Natural killer cell (primary cell): ENCODE measurements at regions of chr6 and their contacts with region 1.

Region 1: GRCh38 chr6:36442671-36443470 is at the starts of genes KCTD20 and PXT1:
- DNase-seq: peak; percentile 87 to 92
- ATAC-seq: peak; percentile 80 to 94 (median 88)
- H3K4me3 ChIP-seq: peak within 1 kb of the TSS; percentile 91
- H3K4me3 Mint-ChIP-seq: peak within 1 kb of the TSS; percentile 97
- H3K27ac ChIP-seq: peak within 1 kb of the TSS; percentile 89
- H3K27ac Mint-ChIP-seq: peak within 1 kb of the TSS; percentile 94 to 95
- H3K4me1 ChIP-seq: peaks cover 25% of the 10 kb centered on the region
- H3K4me1 Mint-ChIP-seq: peaks cover 37 to 45% of the 10 kb centered on the region in 2 donors
- H3K27me3 ChIP-seq: no peaks in the 10 kb centered on the region
- H3K27me3 Mint-ChIP-seq: no peaks in the 10 kb centered on the region
- CTCF ChIP-seq: no peak
- total RNA-seq, gene KCTD20: 37.7 to 43.5 (median 43.2) TPM
- total RNA-seq, gene PXT1: 0.27 to 1.0 (median 0.28) TPM

Region 2: GRCh38 chr6:36546920-36547645 is 104.2 kb after region 1 on chr6 and contains the start of gene STK38:
- intact Hi-C with region 1: loop called (anchors 5 kb)
- DNase-seq: peak; percentile 87 to 96
- ATAC-seq: peak; percentile 84 to 92 (median 87)
- H3K4me3 ChIP-seq: peak within 1 kb of the TSS; percentile 89
- H3K4me3 Mint-ChIP-seq: peak within 1 kb of the TSS; percentile 99
- H3K27ac ChIP-seq: peak within 1 kb of the TSS; percentile 93
- H3K27ac Mint-ChIP-seq: peak within 1 kb of the TSS; percentile 93 to 100
- H3K4me1 ChIP-seq: peaks cover 35% of the 10 kb centered on the region
- H3K4me1 Mint-ChIP-seq: peaks cover 47 to 56% of the 10 kb centered on the region in 2 donors
- H3K27me3 ChIP-seq: no peaks in the 10 kb centered on the region
- H3K27me3 Mint-ChIP-seq: no peaks in the 10 kb centered on the region
- CTCF ChIP-seq: no peak
- total RNA-seq, gene STK38: 105 to 157 (median 126) TPM

Region 3: DNA sequence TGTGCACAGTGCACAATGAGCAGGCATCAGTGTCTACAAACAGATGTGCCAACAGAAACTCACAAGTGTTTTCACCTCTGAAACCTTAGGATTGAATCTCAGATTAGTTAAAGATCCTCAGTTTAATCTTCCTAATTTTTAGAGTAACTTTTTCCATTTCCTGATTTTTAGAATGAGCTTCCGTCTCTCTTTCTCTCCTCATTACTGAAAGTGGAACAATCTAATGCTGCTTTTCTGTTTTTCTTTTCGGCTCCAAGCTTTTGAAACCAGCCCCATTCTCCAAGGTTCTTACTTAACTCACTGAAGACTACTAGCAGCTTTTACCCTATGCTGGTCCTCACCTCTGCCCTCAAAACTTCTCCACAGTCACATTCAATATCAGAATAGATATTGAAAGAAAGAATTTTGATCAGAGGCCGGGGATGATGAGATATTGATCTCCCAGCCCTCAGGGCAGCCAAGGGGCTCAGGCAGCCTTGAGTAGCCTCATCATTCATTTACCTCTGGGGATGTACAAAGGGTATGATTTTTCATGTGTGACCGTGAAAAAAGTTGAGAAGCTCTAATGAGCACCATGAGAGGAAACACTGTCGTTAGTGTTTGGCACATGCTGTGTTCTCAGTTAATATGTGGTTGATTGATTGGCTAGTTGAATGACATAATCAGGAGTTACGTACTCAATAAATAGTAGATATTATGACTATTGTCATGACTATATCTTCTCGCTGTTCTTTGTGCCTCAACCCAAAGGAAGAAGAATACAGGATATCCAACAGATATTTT is 116.3 kb after region 1 on chr6:
- intact Hi-C with region 1: no loop called
- DNase-seq: no peak
- ATAC-seq: no peak
- H3K4me3 ChIP-seq: no peak overlapping the region
- H3K4me3 Mint-ChIP-seq: no peak overlapping the region
- H3K27ac ChIP-seq: no peak overlapping the region
- H3K27ac Mint-ChIP-seq: no peak overlapping the region
- H3K4me1 ChIP-seq: no peaks in the 10 kb centered on the region
- H3K4me1 Mint-ChIP-seq: peaks cover 10 to 13% of the 10 kb centered on the region in 2 donors
- H3K27me3 ChIP-seq: no peaks in the 10 kb centered on the region
- H3K27me3 Mint-ChIP-seq: peaks cover 7 to 11% of the 10 kb centered on the region in 2 donors
- CTCF ChIP-seq: no peak

Region 4: DNA sequence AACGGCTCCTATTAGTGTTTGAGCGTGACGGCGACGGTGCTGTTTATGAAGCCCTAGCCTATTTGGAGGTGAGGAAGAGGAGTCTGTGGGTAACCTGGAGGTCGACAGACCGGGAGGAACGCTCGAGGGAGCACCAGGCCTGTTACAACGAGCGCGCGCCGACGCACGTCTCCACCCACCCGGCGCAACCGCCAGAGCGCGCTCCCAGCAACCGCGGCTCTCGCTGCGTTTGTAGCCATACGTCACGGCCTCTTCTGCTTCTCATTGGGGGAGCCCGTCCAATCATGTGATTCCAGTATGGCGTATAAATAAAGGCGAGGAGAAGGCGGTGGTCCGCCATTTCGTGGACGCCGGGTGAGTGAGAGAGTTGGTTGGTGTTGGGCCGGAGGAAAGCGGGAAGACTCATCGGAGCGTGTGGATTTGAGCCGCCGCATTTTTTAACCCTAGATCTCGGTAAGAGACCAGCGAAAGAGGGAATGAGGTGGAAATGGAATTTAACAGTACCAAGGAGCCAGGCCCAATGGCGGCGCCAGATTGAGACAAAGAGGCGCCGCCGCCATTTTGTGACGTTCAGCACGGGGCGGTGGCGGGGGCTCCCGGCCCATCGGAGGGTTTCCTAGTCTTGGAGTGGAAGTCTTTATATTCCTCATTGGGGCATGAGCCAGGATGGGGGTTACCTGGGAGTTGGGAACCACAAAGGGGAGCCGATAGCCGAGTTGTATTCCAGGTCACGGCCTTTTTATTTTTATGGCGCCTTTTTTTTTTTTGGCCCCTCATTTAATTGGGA is 151.4 kb after region 1 on chr6 and contains the start of gene SRSF3:
- intact Hi-C with region 1: loop called (anchors 5 kb)
- DNase-seq: peak; percentile 95 to 99
- ATAC-seq: peak; percentile 80 to 96 (median 87)
- H3K4me3 ChIP-seq: peak within 1 kb of the TSS; percentile 82
- H3K4me3 Mint-ChIP-seq: peak within 1 kb of the TSS; percentile 94
- H3K27ac ChIP-seq: peak within 1 kb of the TSS; percentile 98
- H3K27ac Mint-ChIP-seq: peak within 1 kb of the TSS; percentile 97 to 99
- H3K4me1 ChIP-seq: peaks cover 52% of the 10 kb centered on the region
- H3K4me1 Mint-ChIP-seq: peaks cover 59 to 60% of the 10 kb centered on the region in 2 donors
- H3K27me3 ChIP-seq: no peaks in the 10 kb centered on the region
- H3K27me3 Mint-ChIP-seq: peaks cover 0 to 2% of the 10 kb centered on the region in 2 donors
- CTCF ChIP-seq: no peak
- total RNA-seq, gene SRSF3: 445 to 526 (median 447) TPM

Region 5: DNA sequence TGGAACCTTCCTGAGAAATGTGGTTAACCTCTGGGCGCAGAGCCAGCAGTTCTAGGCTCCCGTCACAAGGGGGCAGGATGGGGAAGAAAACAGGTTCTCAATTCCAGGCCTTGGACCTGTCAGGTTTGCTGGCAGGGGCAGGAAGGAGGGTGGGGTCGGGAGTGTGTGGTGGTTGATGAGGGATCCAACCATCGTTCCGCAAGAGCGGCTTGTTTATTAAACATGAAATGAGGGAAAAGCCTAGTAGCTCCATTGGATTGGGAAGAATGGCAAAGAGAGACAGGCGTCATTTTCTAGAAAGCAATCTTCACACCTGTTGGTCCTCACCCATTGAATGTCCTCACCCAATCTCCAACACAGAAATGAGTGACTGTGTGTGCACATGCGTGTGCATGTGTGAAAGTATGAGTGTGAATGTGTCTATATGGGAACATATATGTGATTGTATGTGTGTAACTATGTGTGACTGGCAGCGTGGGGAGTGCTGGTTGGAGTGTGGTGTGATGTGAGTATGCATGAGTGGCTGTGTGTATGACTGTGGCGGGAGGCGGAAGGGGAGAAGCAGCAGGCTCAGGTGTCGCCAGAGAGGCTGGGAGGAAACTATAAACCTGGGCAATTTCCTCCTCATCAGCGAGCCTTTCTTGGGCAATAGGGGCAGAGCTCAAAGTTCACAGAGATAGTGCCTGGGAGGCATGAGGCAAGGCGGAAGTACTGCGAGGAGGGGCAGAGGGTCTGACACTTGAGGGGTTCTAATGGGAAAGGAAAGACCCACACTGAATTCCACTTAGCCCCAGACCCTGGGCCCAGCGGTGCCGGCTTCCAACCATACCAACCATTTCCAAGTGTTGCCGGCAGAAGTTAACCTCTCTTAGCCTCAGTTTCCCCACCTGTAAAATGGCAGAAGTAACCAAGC is 180.9 kb after region 1 on chr6:
- intact Hi-C with region 1: no loop called
- DNase-seq: peak; percentile 67 to 88
- ATAC-seq: peak; percentile 78 to 94 (median 94)
- H3K4me3 ChIP-seq: no peak overlapping the region
- H3K4me3 Mint-ChIP-seq: no peak overlapping the region
- H3K27ac ChIP-seq: no peak overlapping the region
- H3K27ac Mint-ChIP-seq: peak overlapping the region in 1 of 2 donors; percentile 35
- H3K4me1 ChIP-seq: peaks cover 11% of the 10 kb centered on the region
- H3K4me1 Mint-ChIP-seq: peaks cover 0 to 14% of the 10 kb centered on the region in 2 donors
- H3K27me3 ChIP-seq: no peaks in the 10 kb centered on the region
- H3K27me3 Mint-ChIP-seq: peaks cover 0 to 2% of the 10 kb centered on the region in 2 donors
- CTCF ChIP-seq: peak; percentile 86

Region 6: GRCh38 chr6:36703982-36704381 is 261.1 kb after region 1 on chr6:
- intact Hi-C with region 1: no loop called
- DNase-seq: no peak
- ATAC-seq: no peak
- H3K4me3 ChIP-seq: no peak overlapping the region
- H3K4me3 Mint-ChIP-seq: no peak overlapping the region
- H3K27ac ChIP-seq: no peak overlapping the region
- H3K27ac Mint-ChIP-seq: no peak overlapping the region
- H3K4me1 ChIP-seq: peaks cover 8% of the 10 kb centered on the region
- H3K4me1 Mint-ChIP-seq: peaks cover 0 to 4% of the 10 kb centered on the region in 2 donors
- H3K27me3 ChIP-seq: no peaks in the 10 kb centered on the region
- H3K27me3 Mint-ChIP-seq: peaks cover 0 to 5% of the 10 kb centered on the region in 2 donors
- CTCF ChIP-seq: no peak

Region 7: DNA sequence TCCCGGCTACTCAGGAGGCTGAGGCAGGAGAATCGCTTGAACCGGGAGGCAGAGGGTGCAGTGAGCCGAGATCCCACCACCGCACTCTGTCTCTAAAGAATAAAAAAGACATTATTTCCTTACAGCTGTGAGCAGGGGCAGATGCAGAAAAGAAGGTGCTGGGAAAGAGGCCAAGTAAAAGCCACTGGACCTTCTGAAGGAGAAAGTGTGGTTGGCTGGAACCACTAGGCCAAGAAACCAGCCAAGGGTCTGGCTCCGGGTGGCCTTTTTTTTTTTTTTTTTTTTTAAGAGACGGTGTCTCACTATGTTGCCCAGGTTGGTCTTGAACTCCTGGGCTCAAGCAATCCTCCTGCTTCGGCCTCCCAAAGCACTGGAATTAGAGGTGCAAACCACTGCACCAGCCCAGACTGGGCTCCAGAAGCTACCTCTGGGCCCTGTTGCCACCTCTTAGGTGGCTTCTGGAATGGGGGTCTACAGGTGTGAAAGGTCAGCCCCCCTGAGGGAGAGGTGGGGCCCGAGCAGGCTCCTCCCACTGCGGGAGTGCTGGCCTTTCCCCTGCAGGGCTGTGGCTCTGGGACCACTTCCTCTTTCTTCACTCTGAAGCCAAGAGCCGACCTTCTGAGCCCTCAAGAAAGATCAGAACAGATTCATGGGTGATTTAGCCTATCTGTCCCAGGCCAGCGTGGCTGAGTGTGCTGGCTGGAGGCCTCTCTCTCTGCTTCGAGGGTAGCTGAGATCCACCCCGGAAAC is 562.4 kb after region 1 on chr6 and contains the start of gene FGD2:
- intact Hi-C with region 1: no loop called
- DNase-seq: no peak
- ATAC-seq: peak; percentile 46 to 71 (median 66)
- H3K4me3 ChIP-seq: peak within 1 kb of the TSS; percentile 60
- H3K4me3 Mint-ChIP-seq: peak within 1 kb of the TSS; percentile 65
- H3K27ac ChIP-seq: peak within 1 kb of the TSS; percentile 69
- H3K27ac Mint-ChIP-seq: peak within 1 kb of the TSS; percentile 56 to 68
- H3K4me1 ChIP-seq: peaks cover 45% of the 10 kb centered on the region
- H3K4me1 Mint-ChIP-seq: peaks cover 22 to 28% of the 10 kb centered on the region in 2 donors
- H3K27me3 ChIP-seq: no peaks in the 10 kb centered on the region
- H3K27me3 Mint-ChIP-seq: no peaks in the 10 kb centered on the region
- CTCF ChIP-seq: no peak
- total RNA-seq, gene FGD2: 6.3 to 22.3 (median 14.1) TPM